Activated T-helper 1 cell treated with anti-CD3 and anti-CD28 coated beads, Interleukin-12 subunit alpha, Interleukin-12 subunit beta, Interleukin-2, Interleukin-4 antibody, amounts not matched to agents 30 ng/mL and 10 ng/mL and 1 ng/mL, durations not matched to agents 14 hours and 24 hours and 36 hours (primary cell): ENCODE measurements at regions of chr10 and their contacts with region 1.

Region 1: GRCh38 chr10:62870866-62871265 is 54.7 kb upstream of the EGR2 start:
- DNase-seq: no peak
- H3K4me3 Mint-ChIP-seq: no peak overlapping the region
- H3K27ac Mint-ChIP-seq: no peak overlapping the region
- H3K4me1 Mint-ChIP-seq: peaks cover 17% of the 10 kb centered on the region
- H3K27me3 Mint-ChIP-seq: peaks cover 11% of the 10 kb centered on the region

Region 2: DNA sequence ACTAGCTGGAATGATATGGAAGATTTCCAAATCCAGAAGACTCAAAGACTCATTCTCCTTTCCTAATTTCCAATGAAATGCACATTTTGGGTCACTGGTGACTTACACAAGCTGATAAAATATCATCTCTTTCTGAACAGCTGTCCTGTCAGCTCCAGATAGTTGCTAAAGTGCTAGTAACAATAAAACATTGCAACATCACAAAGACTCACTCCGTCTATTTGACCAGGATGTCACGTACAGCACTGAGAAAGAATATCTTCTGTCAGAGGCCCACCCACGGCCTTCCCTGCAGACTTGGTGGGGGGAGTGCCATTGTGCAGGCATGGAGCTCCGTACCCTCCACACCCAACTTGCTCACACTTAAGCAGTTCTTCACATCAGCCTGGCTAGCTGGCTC is 24.2 kb after region 1 on chr10:
- intact Hi-C with region 1: loop called (anchors 2 kb)
- DNase-seq: no peak
- H3K4me3 Mint-ChIP-seq: no peak overlapping the region
- H3K27ac Mint-ChIP-seq: no peak overlapping the region
- H3K4me1 Mint-ChIP-seq: no peaks in the 10 kb centered on the region
- H3K27me3 Mint-ChIP-seq: peaks cover 11% of the 10 kb centered on the region

Region 3: GRCh38 chr10:64011912-64012714 is 1141.2 kb after region 1 on chr10:
- intact Hi-C with region 1: no loop called
- DNase-seq: no peak
- H3K4me3 Mint-ChIP-seq: no peak overlapping the region
- H3K27ac Mint-ChIP-seq: no peak overlapping the region
- H3K4me1 Mint-ChIP-seq: no peaks in the 10 kb centered on the region
- H3K27me3 Mint-ChIP-seq: no peaks in the 10 kb centered on the region